ENCODE measurements at regions of chr7 and their contacts with region 1.

Region 1: GRCh38 chr7:101815835-101816493 is 1.5 kb upstream of the CUX1 start:
- DNase-seq: no peak
- ATAC-seq: peak; percentile 63
- H3K4me3 ChIP-seq: peak overlapping the region; percentile 53; the same call in 1 of the 2 replicates
- H3K27ac ChIP-seq: peak overlapping the region; percentile 68
- H3K4me1 ChIP-seq: peaks cover 4% of the 10 kb centered on the region; the same call in 1 of the 2 replicates
- H3K27me3 ChIP-seq: no peaks in the 10 kb centered on the region
- CTCF ChIP-seq: peak in 1 of 3 experiments; percentile 19; a peak in 2 of 6 replicates
- EP300 ChIP-seq: no peak
- POLR2A ChIP-seq: peak; percentile 69
- RAD21 ChIP-seq: no peak

Region 2: DNA sequence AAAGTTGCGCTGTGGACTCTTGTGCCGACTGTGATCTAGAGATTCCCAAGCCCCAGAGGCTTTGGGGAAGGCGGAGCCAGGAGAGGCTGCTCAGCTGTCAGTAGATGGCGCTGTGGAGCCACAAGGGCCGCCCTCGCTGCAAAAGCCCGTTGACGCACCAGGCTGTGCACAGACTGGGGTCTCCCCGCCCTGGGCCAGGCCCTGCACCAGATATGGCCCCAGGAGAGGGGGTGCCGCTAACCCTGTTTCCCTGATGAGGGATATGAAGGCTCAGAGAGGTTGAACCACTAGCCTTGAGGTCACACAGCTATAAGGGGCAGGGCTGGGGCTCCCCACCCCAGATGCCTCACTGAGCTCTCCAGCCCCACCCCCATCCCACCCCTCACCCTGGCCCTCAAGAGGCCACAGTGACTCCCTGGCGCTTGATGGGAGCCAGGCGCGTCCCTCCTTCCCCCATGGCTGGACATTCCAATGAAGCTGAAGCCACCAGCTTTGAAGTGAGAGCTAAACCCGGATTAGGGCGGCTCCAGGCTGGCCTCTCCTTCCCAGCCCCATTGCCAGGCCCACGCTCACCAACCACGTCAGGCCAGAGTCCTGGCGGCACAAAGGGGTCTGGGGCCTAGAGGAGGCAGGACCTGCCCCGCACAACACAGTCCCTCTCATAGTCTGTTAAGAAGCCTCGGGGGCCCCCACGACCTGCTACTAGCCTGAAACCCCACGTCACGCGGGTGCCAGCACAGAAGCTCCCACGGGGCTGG is 213.3 kb before region 1 on chr7:
- CTCF ChIA-PET with region 1: interaction called, 11 read pairs
- POLR2A ChIA-PET with region 1: no interaction called
- RAD21 ChIA-PET with region 1: interaction called, 7 read pairs
- SMC1A ChIA-PET with region 1: interaction called, 4 read pairs
- in situ Hi-C with region 1: no loop called
- intact Hi-C with region 1: loop called (anchors 1 kb)
- DNase-seq: peak; percentile 0
- ATAC-seq: peak; percentile 99
- H3K4me3 ChIP-seq: no peak overlapping the region
- H3K27ac ChIP-seq: no peak overlapping the region
- H3K4me1 ChIP-seq: no peaks in the 10 kb centered on the region
- H3K27me3 ChIP-seq: no peaks in the 10 kb centered on the region; a peak in 1 of 4 replicates
- CTCF ChIP-seq: peak; percentile 82 to 92 (median 91)
- EP300 ChIP-seq: no peak
- POLR2A ChIP-seq: no peak
- RAD21 ChIP-seq: peak; percentile 77

Region 3: GRCh38 chr7:101743241-101743994 is 72.5 kb before region 1 on chr7:
- CTCF ChIA-PET with region 1: interaction called, 14 read pairs
- POLR2A ChIA-PET with region 1: interaction called, 4 read pairs
- RAD21 ChIA-PET with region 1: interaction called, 22 read pairs
- SMC1A ChIA-PET with region 1: interaction called, 21 read pairs
- in situ Hi-C with region 1: loop called (anchors 5 kb)
- intact Hi-C with region 1: loop called (anchors 1 kb)
- DNase-seq: no peak
- ATAC-seq: peak; percentile 57
- H3K4me3 ChIP-seq: peak overlapping the region; percentile 79
- H3K27ac ChIP-seq: peak overlapping the region; percentile 76
- H3K4me1 ChIP-seq: peaks cover 68% of the 10 kb centered on the region
- H3K27me3 ChIP-seq: no peaks in the 10 kb centered on the region
- CTCF ChIP-seq: peak; percentile 42 to 51 (median 49); a peak in 5 of 6 replicates
- EP300 ChIP-seq: no peak
- POLR2A ChIP-seq: no peak
- RAD21 ChIP-seq: peak; percentile 6; the same call in 1 of the 2 replicates

Region 4: GRCh38 chr7:102125127-102125561 is 309.2 kb after region 1 on chr7:
- CTCF ChIA-PET with region 1: no interaction called
- POLR2A ChIA-PET with region 1: no interaction called
- RAD21 ChIA-PET with region 1: no interaction called
- SMC1A ChIA-PET with region 1: interaction called, 3 read pairs
- in situ Hi-C with region 1: no loop called
- intact Hi-C with region 1: loop called (anchors 5 kb)
- DNase-seq: peak; percentile 51
- ATAC-seq: peak; percentile 94
- H3K4me3 ChIP-seq: no peak overlapping the region
- H3K27ac ChIP-seq: peak overlapping the region; percentile 4; the same call in 1 of the 2 replicates
- H3K4me1 ChIP-seq: peaks cover 26% of the 10 kb centered on the region
- H3K27me3 ChIP-seq: no peaks in the 10 kb centered on the region
- CTCF ChIP-seq: peak in 2 of 3 experiments; percentile 21 to 79; a peak in 3 of 6 replicates
- EP300 ChIP-seq: no peak
- POLR2A ChIP-seq: no peak
- RAD21 ChIP-seq: peak; percentile 58

Region 5: DNA sequence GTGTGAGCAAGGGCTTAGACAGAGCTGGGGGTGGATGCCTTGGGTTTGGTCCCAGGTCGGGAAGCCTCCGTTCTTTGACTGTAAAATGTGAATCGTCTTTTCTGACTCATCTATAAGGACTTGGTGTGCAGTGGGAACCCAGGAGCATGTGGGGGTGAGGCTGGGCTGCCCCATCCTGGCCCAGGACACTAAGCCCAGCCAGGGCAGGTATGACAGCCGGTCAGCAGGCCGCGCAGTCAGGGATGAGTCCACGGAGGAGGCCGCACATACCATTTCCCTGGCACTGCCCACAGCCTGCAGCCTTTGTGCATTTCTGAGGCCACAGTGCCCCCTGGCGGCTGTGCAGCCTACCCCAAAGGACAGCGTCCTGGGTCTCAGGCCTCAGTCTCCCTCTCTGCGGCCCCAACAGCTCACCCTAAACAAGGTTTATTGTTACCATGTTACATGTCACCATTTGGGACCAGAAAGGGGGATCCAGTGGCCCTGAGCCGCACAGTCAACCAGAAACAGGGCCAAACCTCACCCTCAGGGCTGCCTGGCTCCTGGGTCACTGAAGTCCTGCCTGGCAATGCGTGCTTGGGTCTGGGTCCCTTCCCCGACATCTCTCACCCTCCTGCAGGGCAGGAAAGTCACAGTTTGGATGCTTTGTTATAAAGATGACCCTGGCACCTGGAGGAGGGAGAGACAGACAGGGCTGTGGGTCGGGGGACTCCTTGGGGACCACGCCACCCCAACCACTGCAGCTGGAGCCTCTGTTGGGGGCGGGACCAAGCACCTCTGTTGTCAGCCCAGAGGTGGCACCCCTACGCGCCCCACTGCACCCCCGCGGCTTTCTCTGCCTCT is 456.3 kb after region 1 on chr7:
- CTCF ChIA-PET with region 1: interaction called, 3 read pairs
- POLR2A ChIA-PET with region 1: no interaction called
- RAD21 ChIA-PET with region 1: interaction called, 3 read pairs
- SMC1A ChIA-PET with region 1: interaction called, 3 read pairs
- in situ Hi-C with region 1: no loop called
- intact Hi-C with region 1: loop called (anchors 2 kb)
- DNase-seq: no peak
- ATAC-seq: peak; percentile 98
- H3K4me3 ChIP-seq: no peak overlapping the region
- H3K27ac ChIP-seq: no peak overlapping the region
- H3K4me1 ChIP-seq: no peaks in the 10 kb centered on the region
- H3K27me3 ChIP-seq: no peaks in the 10 kb centered on the region; a peak in 1 of 4 replicates
- CTCF ChIP-seq: peak; percentile 92 to 97 (median 95); a peak in 5 of 6 replicates
- EP300 ChIP-seq: no peak
- POLR2A ChIP-seq: no peak
- RAD21 ChIP-seq: peak; percentile 96

Measured in GM12878 (cell line).